ENCODE measurements at regions of chr12 and their contacts with region 1.

Region 1: DNA sequence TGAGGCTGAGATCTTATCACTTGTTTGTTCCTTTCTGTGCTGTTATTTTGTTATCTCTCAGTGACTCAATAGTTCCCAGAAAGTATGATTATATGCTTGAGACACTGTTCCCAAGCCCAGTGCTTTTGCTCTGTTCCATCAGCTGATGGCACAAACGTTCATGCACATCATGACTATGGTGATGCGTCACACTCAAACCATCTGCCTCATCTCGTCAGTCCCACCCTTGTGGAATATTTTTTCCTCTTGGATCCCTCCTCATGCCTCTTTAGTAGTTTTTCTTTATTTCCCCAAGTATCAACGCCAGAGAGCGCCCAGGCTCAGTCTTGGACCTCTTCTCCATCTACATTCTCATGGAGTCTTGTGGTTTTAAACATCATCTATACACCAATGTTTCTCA is 786.9 kb downstream of the AACS start:
- DNase-seq: no peak
- ATAC-seq: no peak
- H3K4me3 ChIP-seq: no peak overlapping the region
- H3K27ac ChIP-seq: no peak overlapping the region
- H3K4me1 ChIP-seq: no peaks in the 10 kb centered on the region
- H3K27me3 ChIP-seq: no peaks in the 10 kb centered on the region
- CTCF ChIP-seq: no peak
- POLR2A ChIP-seq: no peak

Region 2: DNA sequence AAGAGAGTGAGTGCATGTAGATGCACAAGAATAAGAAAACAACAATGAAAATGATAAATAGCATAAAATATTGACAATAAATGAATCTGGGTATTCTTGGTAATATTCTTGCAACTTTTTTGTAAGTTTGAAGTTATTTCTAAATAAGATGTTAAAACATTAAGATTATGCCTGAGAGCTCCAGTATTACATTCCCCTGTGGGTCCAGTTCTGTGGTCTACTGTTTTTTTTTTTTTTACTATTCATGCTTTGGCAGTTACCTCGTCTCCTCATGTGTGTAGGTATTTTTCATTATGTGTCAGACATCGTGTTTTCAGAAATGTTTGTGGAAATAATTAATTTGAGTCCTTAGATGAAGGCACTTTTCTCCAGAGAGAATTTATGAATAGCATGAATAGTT is 400.8 kb before region 1 on chr12:
- intact Hi-C with region 1: no loop called
- DNase-seq: no peak
- ATAC-seq: no peak
- H3K4me3 ChIP-seq: no peak overlapping the region
- H3K27ac ChIP-seq: no peak overlapping the region
- H3K4me1 ChIP-seq: no peaks in the 10 kb centered on the region
- H3K27me3 ChIP-seq: peaks cover 0 to 10% (median 0%) of the 10 kb centered on the region in 9 donors
- CTCF ChIP-seq: no peak
- POLR2A ChIP-seq: no peak

Region 3: GRCh38 chr12:125832365-125832764 is 19.8 kb before region 1 on chr12:
- intact Hi-C with region 1: loop called in 1 of 10 experiments (anchors 2 kb)
- DNase-seq: no peak
- ATAC-seq: no peak
- H3K4me3 ChIP-seq: no peak overlapping the region
- H3K27ac ChIP-seq: no peak overlapping the region
- H3K4me1 ChIP-seq: no peaks in the 10 kb centered on the region
- H3K27me3 ChIP-seq: no peaks in the 10 kb centered on the region
- CTCF ChIP-seq: no peak
- POLR2A ChIP-seq: no peak

Measured in heart left ventricle (tissue), 16 donors.